Activated B cell treated with CpG ODN at 0.5 μM for 24 hours (primary cell): ENCODE measurements at regions of chr12 and their contacts with region 1.

Region 1: GRCh38 chr12:120437754-120438494 is at the start of gene COX6A1:
- DNase-seq: peak; percentile 87
- ATAC-seq: peak; percentile 96
- H3K4me3 Mint-ChIP-seq: peak within 1 kb of the TSS; percentile 97
- H3K27ac Mint-ChIP-seq: peak within 1 kb of the TSS; percentile 89
- H3K4me1 Mint-ChIP-seq: peaks cover 29% of the 10 kb centered on the region
- H3K27me3 Mint-ChIP-seq: peaks cover 4% of the 10 kb centered on the region
- CTCF ChIP-seq: no peak
- total RNA-seq, gene COX6A1: 255 and 292 TPM in 2 replicates

Region 2: GRCh38 chr12:119949145-119949544 is 488.8 kb before region 1 on chr12:
- CTCF ChIA-PET with region 1: no interaction called
- POLR2A ChIA-PET with region 1: no interaction called
- intact Hi-C with region 1: no loop called
- DNase-seq: no peak
- ATAC-seq: no peak
- H3K4me3 Mint-ChIP-seq: no peak overlapping the region
- H3K27ac Mint-ChIP-seq: no peak overlapping the region
- H3K4me1 Mint-ChIP-seq: no peaks in the 10 kb centered on the region
- H3K27me3 Mint-ChIP-seq: peaks cover 6% of the 10 kb centered on the region
- CTCF ChIP-seq: no peak

Region 3: DNA sequence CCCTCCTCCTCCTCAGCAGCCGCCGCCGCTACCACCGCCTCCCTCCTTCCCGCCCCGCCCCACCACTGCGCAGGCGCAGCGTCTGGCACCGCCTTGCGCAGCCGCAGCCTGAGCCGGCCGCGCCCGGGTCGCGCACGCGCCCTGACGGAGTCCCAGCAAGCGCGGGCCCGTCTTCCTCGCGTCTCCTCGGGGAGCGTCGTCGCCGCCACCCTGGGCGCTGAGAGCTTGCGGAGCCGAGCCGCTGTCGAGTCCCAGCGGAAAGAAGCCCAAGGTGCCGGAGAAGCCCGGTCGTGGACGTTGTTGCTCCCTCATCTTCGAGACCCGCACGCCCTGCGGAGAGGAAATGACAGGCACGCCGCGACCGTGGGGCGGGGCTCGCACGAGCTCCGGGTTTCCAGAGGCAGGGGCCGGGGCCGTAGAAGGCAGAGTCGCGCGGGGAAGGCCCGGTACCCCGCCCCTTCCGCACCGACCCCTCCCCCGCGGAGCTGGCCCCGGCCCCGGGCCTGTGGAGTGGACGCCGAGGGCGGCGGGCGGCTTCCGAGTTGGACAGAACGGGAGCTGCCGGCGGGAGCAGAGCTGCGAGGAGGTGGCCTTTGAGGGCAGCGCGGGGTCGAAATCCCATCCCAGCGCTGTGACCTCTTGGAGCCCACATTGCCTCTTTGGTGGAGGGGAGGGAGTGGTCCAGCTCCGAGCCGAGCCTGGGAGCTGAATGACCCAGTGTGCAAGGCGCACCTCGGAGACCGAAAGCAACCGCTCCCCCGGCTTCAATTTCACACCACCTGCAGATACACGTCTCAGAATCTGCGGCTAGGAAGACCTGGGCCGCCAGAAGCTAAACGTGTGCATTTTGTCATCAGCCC is 320.9 kb before region 1 on chr12:
- CTCF ChIA-PET with region 1: no interaction called
- POLR2A ChIA-PET with region 1: no interaction called
- intact Hi-C with region 1: loop called (anchors 10 kb)
- DNase-seq: peak; percentile 99
- ATAC-seq: peak; percentile 76
- H3K4me3 Mint-ChIP-seq: peak overlapping the region; percentile 78
- H3K27ac Mint-ChIP-seq: peak overlapping the region; percentile 83
- H3K4me1 Mint-ChIP-seq: peaks cover 76% of the 10 kb centered on the region
- H3K27me3 Mint-ChIP-seq: no peaks in the 10 kb centered on the region
- CTCF ChIP-seq: no peak

Region 4: GRCh38 chr12:120495723-120496412 is 57.9 kb after region 1 on chr12 and contains the start of gene DYNLL1:
- CTCF ChIA-PET with region 1: interaction called, 7 read pairs
- POLR2A ChIA-PET with region 1: interaction called, 35 read pairs
- intact Hi-C with region 1: loop called (anchors 1 kb)
- DNase-seq: peak; percentile 99
- ATAC-seq: peak; percentile 96
- H3K4me3 Mint-ChIP-seq: peak within 1 kb of the TSS; percentile 96
- H3K27ac Mint-ChIP-seq: peak within 1 kb of the TSS; percentile 91
- H3K4me1 Mint-ChIP-seq: peaks cover 29% of the 10 kb centered on the region
- H3K27me3 Mint-ChIP-seq: no peaks in the 10 kb centered on the region
- CTCF ChIP-seq: no peak
- total RNA-seq, gene DYNLL1: 159 and 180 TPM in 2 replicates

Region 5: GRCh38 chr12:120649442-120650232 is 211.7 kb after region 1 on chr12:
- CTCF ChIA-PET with region 1: interaction called, 3 read pairs
- POLR2A ChIA-PET with region 1: no interaction called
- intact Hi-C with region 1: loop called (anchors 5 kb)
- DNase-seq: no peak
- ATAC-seq: no peak
- H3K4me3 Mint-ChIP-seq: peak overlapping the region; percentile 75
- H3K27ac Mint-ChIP-seq: peak overlapping the region; percentile 44
- H3K4me1 Mint-ChIP-seq: peaks cover 26% of the 10 kb centered on the region
- H3K27me3 Mint-ChIP-seq: peaks cover 48% of the 10 kb centered on the region
- CTCF ChIP-seq: peak; percentile 50

Region 6: GRCh38 chr12:121095544-121096198 is 657.7 kb after region 1 on chr12:
- CTCF ChIA-PET with region 1: no interaction called
- POLR2A ChIA-PET with region 1: no interaction called
- intact Hi-C with region 1: loop called (anchors 10 kb)
- DNase-seq: peak; percentile 72
- ATAC-seq: peak; percentile 96
- H3K4me3 Mint-ChIP-seq: peak overlapping the region; percentile 83
- H3K27ac Mint-ChIP-seq: no peak overlapping the region
- H3K4me1 Mint-ChIP-seq: peaks cover 29% of the 10 kb centered on the region
- H3K27me3 Mint-ChIP-seq: peaks cover 8% of the 10 kb centered on the region
- CTCF ChIP-seq: peak; percentile 39